ENCODE measurements at regions of chr10 and their contacts with region 1.

Region 1: GRCh38 chr10:133309111-133309719 is 501 bp downstream of the ZNF511 start:
- DNase-seq: peak; percentile 87 to 97 (median 91)
- ATAC-seq: peak; percentile 82
- H3K4me3 ChIP-seq: peak overlapping the region; percentile 56 to 72
- H3K4me3 Mint-ChIP-seq: peak overlapping the region; percentile 99
- H3K27ac ChIP-seq: peak overlapping the region; percentile 97 to 99
- H3K27ac Mint-ChIP-seq: peak overlapping the region; percentile 90
- H3K4me1 ChIP-seq: peaks cover 18% of the 10 kb centered on the region
- H3K4me1 Mint-ChIP-seq: peaks cover 32% of the 10 kb centered on the region
- H3K27me3 ChIP-seq: no peaks in the 10 kb centered on the region
- H3K27me3 Mint-ChIP-seq: no peaks in the 10 kb centered on the region
- CTCF ChIP-seq: no peak

Region 2: GRCh38 chr10:132307823-132308587 is 1001.2 kb before region 1 on chr10 and contains the start of gene STK32C:
- CTCF ChIA-PET with region 1: no interaction called
- POLR2A ChIA-PET with region 1: no interaction called
- intact Hi-C with region 1: loop called in 1 of 2 experiments (anchors 5 kb)
- DNase-seq: peak; percentile 82 to 94 (median 90)
- ATAC-seq: peak; percentile 90
- H3K4me3 ChIP-seq: peak within 1 kb of the TSS; percentile 65 to 74
- H3K4me3 Mint-ChIP-seq: peak within 1 kb of the TSS; percentile 87
- H3K27ac ChIP-seq: peak within 1 kb of the TSS; percentile 43 to 50
- H3K27ac Mint-ChIP-seq: peak within 1 kb of the TSS; percentile 60
- H3K4me1 ChIP-seq: peaks cover 13% of the 10 kb centered on the region
- H3K4me1 Mint-ChIP-seq: peaks cover 17% of the 10 kb centered on the region
- H3K27me3 ChIP-seq: peaks cover 0 to 2% of the 10 kb centered on the region in 2 experiments
- H3K27me3 Mint-ChIP-seq: no peaks in the 10 kb centered on the region
- CTCF ChIP-seq: no peak
- total RNA-seq, gene STK32C: 5.0 to 5.4 TPM

Region 3: GRCh38 chr10:133261726-133262325 is 47.4 kb before region 1 on chr10:
- CTCF ChIA-PET with region 1: interaction called, 8 read pairs
- POLR2A ChIA-PET with region 1: no interaction called
- intact Hi-C with region 1: loop called (anchors 1 to 2 kb)
- DNase-seq: peak; percentile 73 to 89 (median 82)
- ATAC-seq: peak; percentile 29
- H3K4me3 ChIP-seq: peak overlapping the region; percentile 61 to 68
- H3K4me3 Mint-ChIP-seq: peak overlapping the region; percentile 82
- H3K27ac ChIP-seq: peak overlapping the region; percentile 63 to 74
- H3K27ac Mint-ChIP-seq: peak overlapping the region; percentile 77
- H3K4me1 ChIP-seq: peaks cover 71% of the 10 kb centered on the region
- H3K4me1 Mint-ChIP-seq: peaks cover 66% of the 10 kb centered on the region
- H3K27me3 ChIP-seq: no peaks in the 10 kb centered on the region
- H3K27me3 Mint-ChIP-seq: no peaks in the 10 kb centered on the region
- CTCF ChIP-seq: no peak

Region 4: GRCh38 chr10:133324198-133324792 is 15.1 kb after region 1 on chr10:
- CTCF ChIA-PET with region 1: interaction called, 24 read pairs
- POLR2A ChIA-PET with region 1: no interaction called
- intact Hi-C with region 1: no loop called
- DNase-seq: peak; percentile 26 to 82 (median 64)
- ATAC-seq: peak; percentile 85
- H3K4me3 ChIP-seq: no peak overlapping the region
- H3K4me3 Mint-ChIP-seq: no peak overlapping the region
- H3K27ac ChIP-seq: no peak overlapping the region
- H3K27ac Mint-ChIP-seq: no peak overlapping the region
- H3K4me1 ChIP-seq: peaks cover 14% of the 10 kb centered on the region
- H3K4me1 Mint-ChIP-seq: peaks cover 12% of the 10 kb centered on the region
- H3K27me3 ChIP-seq: peaks cover 23 to 35% of the 10 kb centered on the region in 2 experiments
- H3K27me3 Mint-ChIP-seq: peaks cover 31% of the 10 kb centered on the region
- CTCF ChIP-seq: no peak

Region 5: DNA sequence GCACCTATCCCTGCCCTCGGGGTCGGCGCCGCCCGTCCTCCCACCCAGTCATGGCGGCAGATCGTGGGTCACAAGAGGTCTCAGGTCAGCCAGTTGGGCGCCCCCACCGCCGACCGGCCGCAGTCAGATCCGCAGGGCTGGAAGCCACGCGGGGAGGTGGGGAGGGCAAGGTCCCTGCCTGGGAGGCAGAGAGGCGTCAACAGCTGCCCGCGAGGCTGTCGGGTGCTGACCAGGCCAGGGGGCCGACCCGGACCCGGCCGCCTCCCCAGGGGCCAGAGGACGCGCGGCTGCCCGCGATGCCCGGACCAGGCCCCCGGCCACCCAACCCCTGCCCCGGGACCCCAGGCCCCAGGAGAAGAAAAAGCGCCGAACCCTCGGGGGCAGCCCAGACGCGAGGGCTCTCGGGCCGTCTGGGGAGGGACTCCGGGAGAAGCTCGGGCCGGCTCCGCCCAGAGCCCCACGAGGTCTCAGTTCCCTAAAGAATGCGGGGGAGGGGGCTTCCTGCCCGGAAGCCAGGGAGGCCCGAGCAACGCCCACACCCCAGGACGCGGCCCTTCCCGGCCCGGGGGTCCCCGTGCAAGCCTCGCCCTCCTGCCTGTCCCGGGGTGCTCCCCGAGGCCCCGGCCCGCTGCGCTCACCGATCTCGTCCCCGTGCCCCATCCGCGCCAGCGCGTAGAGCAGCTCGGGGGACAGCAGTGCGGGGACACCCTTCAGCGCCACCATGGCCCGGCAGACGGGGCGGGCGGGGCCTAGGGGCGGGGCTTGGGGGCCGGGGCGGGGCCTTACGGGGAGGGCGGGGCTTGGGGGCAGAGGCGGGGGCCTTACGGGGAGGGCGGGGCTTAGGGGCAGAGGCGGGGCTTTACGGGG is 48.3 kb after region 1 on chr10 and contains the start of gene FUOM:
- CTCF ChIA-PET with region 1: no interaction called
- POLR2A ChIA-PET with region 1: no interaction called
- intact Hi-C with region 1: loop called in 1 of 2 experiments (anchors 1 kb)
- DNase-seq: peak; percentile 50 to 84 (median 66)
- ATAC-seq: peak; percentile 92
- H3K4me3 ChIP-seq: peak within 1 kb of the TSS; percentile 61 to 72
- H3K4me3 Mint-ChIP-seq: peak within 1 kb of the TSS; percentile 81
- H3K27ac ChIP-seq: peak within 1 kb of the TSS in 1 of 2 experiments; percentile 44
- H3K27ac Mint-ChIP-seq: peak within 1 kb of the TSS; percentile 49
- H3K4me1 ChIP-seq: peaks cover 12% of the 10 kb centered on the region
- H3K4me1 Mint-ChIP-seq: peaks cover 19% of the 10 kb centered on the region
- H3K27me3 ChIP-seq: no peaks in the 10 kb centered on the region
- H3K27me3 Mint-ChIP-seq: no peaks in the 10 kb centered on the region
- CTCF ChIP-seq: no peak
- total RNA-seq, gene FUOM: 7.9 to 10.0 TPM

Region 6: DNA sequence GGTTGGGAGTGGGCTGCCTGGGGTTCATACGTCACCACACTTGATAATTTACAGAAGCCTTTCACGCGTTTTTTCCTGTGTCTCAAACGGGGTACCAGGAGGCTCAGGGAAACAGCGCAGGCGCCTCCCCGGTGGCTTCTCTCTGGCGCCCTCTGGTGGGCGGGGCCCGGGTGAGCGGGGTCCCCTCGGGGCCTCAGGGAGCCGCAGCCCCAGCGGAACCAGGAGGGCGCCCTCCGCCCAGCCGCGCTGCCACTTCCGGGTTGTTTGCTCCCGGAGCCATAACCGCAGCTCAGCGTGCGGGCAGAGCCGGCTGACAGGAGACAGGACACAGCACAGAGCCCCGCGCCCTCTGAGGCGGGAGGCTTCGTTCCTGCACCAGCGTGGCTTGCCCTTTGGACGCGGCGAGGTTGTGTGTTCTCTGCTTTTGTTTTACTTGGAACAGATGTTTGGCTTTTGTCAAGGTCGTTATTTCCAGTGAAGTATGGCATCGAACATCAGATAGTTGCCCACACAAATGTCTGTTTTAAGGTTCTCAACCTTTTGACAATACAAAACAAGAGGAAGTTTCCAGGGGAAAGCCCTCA is 211.0 kb after region 1 on chr10:
- CTCF ChIA-PET with region 1: interaction called, 4 read pairs
- POLR2A ChIA-PET with region 1: no interaction called
- intact Hi-C with region 1: loop called in 1 of 2 experiments (anchors 1 kb)
- DNase-seq: peak; percentile 78 to 97 (median 89)
- ATAC-seq: peak; percentile 99
- H3K4me3 ChIP-seq: peak overlapping the region; percentile 47 to 61
- H3K4me3 Mint-ChIP-seq: peak overlapping the region; percentile 63
- H3K27ac ChIP-seq: no peak overlapping the region
- H3K27ac Mint-ChIP-seq: peak overlapping the region; percentile 45
- H3K4me1 ChIP-seq: peaks cover 6% of the 10 kb centered on the region
- H3K4me1 Mint-ChIP-seq: peaks cover 13% of the 10 kb centered on the region
- H3K27me3 ChIP-seq: no peaks in the 10 kb centered on the region
- H3K27me3 Mint-ChIP-seq: peaks cover 3% of the 10 kb centered on the region
- CTCF ChIP-seq: peak; percentile 88

Region 7: DNA sequence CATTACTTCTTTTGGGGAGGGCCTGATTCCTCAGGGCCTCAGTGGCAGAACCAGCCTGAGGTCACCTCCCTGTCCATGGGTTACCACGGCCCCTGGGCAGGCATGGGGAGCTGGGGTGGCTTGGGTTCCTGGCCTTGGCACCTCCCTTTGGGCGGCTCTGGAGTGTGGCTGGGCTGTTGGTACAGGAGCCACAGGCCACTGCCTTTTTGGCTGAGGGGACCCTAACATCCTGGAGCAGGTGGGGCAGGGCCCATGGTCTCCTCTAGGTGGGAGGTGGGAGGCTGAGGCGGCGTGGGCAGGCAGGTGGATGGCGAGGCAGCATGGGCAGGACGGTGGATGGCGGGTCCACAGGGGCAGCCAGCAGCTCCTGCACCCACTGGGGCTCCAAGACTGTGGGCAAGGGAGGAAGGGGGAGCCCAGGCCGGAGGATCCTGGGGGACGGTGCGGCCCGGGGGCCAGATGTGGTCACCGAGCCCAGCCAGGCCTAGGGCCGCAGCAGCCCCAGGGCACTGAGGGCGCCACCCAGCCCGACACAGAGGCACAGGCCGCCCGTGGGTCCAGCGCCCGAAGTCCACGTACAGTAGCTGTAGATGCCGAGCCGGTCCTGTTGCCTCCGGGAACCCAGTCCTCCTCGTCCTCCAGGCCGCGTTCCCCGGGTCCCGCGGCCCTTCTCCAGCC is 258.5 kb after region 1 on chr10:
- CTCF ChIA-PET with region 1: no interaction called
- POLR2A ChIA-PET with region 1: no interaction called
- intact Hi-C with region 1: no loop called
- DNase-seq: no peak
- ATAC-seq: no peak
- H3K4me3 ChIP-seq: no peak overlapping the region
- H3K4me3 Mint-ChIP-seq: no peak overlapping the region
- H3K27ac ChIP-seq: no peak overlapping the region
- H3K27ac Mint-ChIP-seq: no peak overlapping the region
- H3K4me1 ChIP-seq: no peaks in the 10 kb centered on the region
- H3K4me1 Mint-ChIP-seq: no peaks in the 10 kb centered on the region
- H3K27me3 ChIP-seq: peaks cover 0 to 7% of the 10 kb centered on the region in 2 experiments
- H3K27me3 Mint-ChIP-seq: peaks cover 13% of the 10 kb centered on the region
- CTCF ChIP-seq: no peak

Measured in CD8-positive, alpha-beta T cell (primary cell).